Activated CD8-positive, alpha-beta T cell treated with anti-CD3 and anti-CD28 coated beads for 36 hours (primary cell): ENCODE measurements at regions of chr11 and their contacts with region 1.

Region 1: DNA sequence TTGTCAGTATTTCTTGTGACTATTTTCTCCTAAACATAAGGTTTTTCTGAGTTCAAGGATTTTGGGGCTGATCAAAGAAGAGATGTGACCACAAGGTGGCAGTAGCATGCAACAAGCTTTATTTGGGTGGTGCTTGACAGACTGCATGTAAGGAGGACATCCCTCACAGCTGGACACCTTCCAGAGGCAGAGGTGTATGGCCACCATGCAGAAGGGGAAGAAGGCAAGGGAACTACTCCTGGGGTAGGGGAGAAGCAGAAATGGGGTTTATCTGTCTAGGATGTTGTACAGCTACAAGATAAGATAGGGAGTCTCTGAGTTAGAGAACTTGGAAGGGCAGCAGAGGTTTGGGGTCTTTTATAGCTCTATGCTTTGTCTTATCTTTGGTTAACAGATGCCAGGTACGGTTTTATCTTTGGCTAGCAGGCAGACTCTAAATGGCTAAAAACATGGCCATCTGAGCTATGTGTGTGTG is 5.1 kb upstream of the BIRC2 start:
- DNase-seq: peak; percentile 87
- ATAC-seq: peak; percentile 63
- H3K4me3 Mint-ChIP-seq: no peak overlapping the region
- H3K27ac Mint-ChIP-seq: no peak overlapping the region
- H3K4me1 Mint-ChIP-seq: peaks cover 23% of the 10 kb centered on the region
- H3K27me3 Mint-ChIP-seq: no peaks in the 10 kb centered on the region
- CTCF ChIP-seq: peak; percentile 78

Region 2: GRCh38 chr11:102225689-102226568 is 116.0 kb before region 1 on chr11:
- CTCF ChIA-PET with region 1: no interaction called
- POLR2A ChIA-PET with region 1: no interaction called
- intact Hi-C with region 1: no loop called
- DNase-seq: no peak
- ATAC-seq: no peak
- H3K4me3 Mint-ChIP-seq: no peak overlapping the region
- H3K27ac Mint-ChIP-seq: no peak overlapping the region
- H3K4me1 Mint-ChIP-seq: no peaks in the 10 kb centered on the region
- H3K27me3 Mint-ChIP-seq: peaks cover 2% of the 10 kb centered on the region
- CTCF ChIP-seq: no peak

Region 3: DNA sequence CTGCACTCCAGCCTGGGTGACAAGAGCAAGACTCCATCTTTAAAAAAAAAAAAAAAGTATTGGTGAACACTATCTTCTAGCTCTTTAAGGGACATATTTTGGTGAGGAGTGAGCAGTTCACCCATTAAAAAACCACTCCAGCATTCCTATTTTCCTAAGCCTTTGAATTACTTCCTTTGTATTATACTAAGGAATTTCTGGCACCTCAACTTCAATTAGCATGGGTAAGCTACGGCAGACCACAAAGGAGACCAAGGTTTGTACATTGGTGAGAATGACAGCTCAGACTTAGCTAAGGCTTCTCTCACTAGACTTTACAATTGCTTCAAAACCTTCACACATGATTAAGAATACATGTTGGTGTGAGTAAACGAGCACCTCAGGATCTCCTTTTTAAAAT is 81.6 kb before region 1 on chr11:
- CTCF ChIA-PET with region 1: no interaction called
- POLR2A ChIA-PET with region 1: no interaction called
- intact Hi-C with region 1: no loop called
- DNase-seq: no peak
- ATAC-seq: no peak
- H3K4me3 Mint-ChIP-seq: no peak overlapping the region
- H3K27ac Mint-ChIP-seq: no peak overlapping the region
- H3K4me1 Mint-ChIP-seq: no peaks in the 10 kb centered on the region
- H3K27me3 Mint-ChIP-seq: no peaks in the 10 kb centered on the region
- CTCF ChIP-seq: no peak

Region 4: DNA sequence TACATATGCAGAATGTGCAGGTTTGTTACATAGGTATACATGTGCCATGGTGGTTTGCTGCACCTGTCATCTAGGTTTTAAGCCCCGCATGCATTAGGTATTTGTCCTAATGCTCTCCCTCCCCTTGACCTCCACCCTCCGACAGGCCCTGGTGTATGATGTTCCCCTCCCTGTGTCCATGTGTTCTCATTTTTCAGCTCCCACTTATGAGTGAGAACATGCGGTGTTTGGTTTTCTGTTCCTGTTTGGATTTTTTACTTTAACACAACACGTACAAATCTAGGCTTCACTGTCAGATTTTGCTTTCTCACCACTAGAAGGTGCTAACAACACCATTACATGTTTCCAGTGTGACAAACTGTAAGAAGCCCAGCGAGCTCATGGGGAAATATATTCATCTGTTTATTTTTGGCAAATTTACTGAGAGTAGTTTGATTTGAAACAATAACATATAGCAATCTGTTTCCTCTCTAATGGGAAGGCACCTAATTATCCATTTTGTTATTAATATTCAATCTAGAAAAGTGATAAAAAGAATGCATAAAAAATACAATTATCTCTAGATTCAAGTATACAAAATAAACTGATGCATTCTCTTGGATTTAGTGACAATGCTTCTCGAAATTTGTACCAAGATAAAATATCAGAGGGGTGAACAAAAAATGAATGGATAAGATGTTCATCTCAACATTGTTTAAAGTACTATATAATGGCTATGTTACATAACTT is 47.8 kb before region 1 on chr11:
- CTCF ChIA-PET with region 1: interaction called, 204 read pairs
- POLR2A ChIA-PET with region 1: no interaction called
- intact Hi-C with region 1: loop called (anchors 5 kb)
- DNase-seq: peak; percentile 30
- ATAC-seq: peak; percentile 95
- H3K4me3 Mint-ChIP-seq: peak overlapping the region; percentile 78
- H3K27ac Mint-ChIP-seq: peak overlapping the region; percentile 96
- H3K4me1 Mint-ChIP-seq: peaks cover 24% of the 10 kb centered on the region
- H3K27me3 Mint-ChIP-seq: no peaks in the 10 kb centered on the region
- CTCF ChIP-seq: peak; percentile 69

Region 5: DNA sequence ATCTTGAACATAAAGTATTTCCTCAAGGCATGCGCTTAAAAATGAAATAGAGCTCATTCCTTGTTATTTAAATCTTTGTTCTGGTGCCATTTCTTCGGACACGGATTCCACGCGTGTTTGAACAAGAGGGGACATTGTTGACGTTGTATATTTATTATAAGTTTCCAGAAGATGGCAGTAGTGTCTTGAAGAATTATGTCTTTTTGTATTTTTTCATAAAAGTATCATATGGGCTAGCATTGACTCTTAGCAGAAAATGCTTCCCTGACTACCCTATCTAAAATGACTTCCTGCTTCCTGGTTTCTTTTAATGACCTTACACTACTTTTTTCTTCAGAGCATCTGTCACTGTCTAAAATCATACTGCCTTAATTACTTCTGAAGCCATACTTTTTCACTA is 25.5 kb after region 1 on chr11:
- CTCF ChIA-PET with region 1: interaction called, 18 read pairs
- POLR2A ChIA-PET with region 1: interaction called, 3 read pairs
- intact Hi-C with region 1: no loop called
- DNase-seq: no peak
- ATAC-seq: peak; percentile 64
- H3K4me3 Mint-ChIP-seq: no peak overlapping the region
- H3K27ac Mint-ChIP-seq: peak overlapping the region; percentile 34
- H3K4me1 Mint-ChIP-seq: peaks cover 30% of the 10 kb centered on the region
- H3K27me3 Mint-ChIP-seq: no peaks in the 10 kb centered on the region
- CTCF ChIP-seq: peak; percentile 56

Region 6: DNA sequence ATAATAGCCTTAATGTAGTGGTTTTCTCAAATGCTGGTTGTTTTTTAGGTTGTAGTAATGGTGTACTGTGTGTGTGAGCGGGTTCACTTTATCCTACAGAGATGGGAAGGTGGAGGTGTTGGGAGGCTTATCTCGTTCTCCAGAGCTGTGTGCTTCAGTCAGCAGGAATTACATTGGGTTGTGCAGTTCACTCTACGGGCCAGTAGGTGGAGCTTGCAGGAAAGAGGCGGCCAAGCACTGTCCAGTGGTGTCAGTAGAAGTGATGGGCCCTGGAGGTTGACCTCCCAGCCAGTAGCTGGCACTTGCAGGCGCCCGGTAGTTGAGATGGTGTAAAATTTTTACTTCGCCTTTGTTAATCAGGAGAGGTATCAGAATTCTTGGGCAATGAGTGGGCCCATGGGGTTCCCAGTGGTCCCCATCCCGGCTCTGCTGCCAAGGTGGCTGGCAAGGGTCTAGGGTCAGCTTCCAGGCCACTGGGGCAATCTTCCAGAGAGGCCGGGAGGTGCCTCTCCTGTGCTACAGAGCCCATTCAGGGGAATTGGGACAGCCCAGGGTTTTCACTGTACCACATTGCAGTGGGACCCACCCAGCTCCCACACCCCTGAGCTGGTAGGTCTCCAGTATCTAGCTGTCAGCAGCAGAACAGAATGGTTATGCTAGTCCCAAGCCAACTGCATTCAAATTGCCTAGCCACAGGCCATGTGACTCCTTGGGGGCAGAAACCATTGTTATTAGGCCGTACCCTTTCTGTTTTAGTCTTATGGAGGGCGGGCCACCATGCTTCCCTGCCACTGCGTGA is 49.0 kb after region 1 on chr11:
- CTCF ChIA-PET with region 1: interaction called, 23 read pairs
- POLR2A ChIA-PET with region 1: no interaction called
- intact Hi-C with region 1: no loop called
- DNase-seq: peak; percentile 68
- ATAC-seq: peak; percentile 80
- H3K4me3 Mint-ChIP-seq: no peak overlapping the region
- H3K27ac Mint-ChIP-seq: peak overlapping the region; percentile 39
- H3K4me1 Mint-ChIP-seq: peaks cover 43% of the 10 kb centered on the region
- H3K27me3 Mint-ChIP-seq: no peaks in the 10 kb centered on the region
- CTCF ChIP-seq: peak; percentile 88

Region 7: GRCh38 chr11:102513869-102514268 is 172.0 kb after region 1 on chr11:
- CTCF ChIA-PET with region 1: interaction called, 12 read pairs
- POLR2A ChIA-PET with region 1: no interaction called
- intact Hi-C with region 1: no loop called
- DNase-seq: no peak
- ATAC-seq: no peak
- H3K4me3 Mint-ChIP-seq: no peak overlapping the region
- H3K27ac Mint-ChIP-seq: no peak overlapping the region
- H3K4me1 Mint-ChIP-seq: no peaks in the 10 kb centered on the region
- H3K27me3 Mint-ChIP-seq: no peaks in the 10 kb centered on the region
- CTCF ChIP-seq: no peak

Region 8: GRCh38 chr11:102614485-102614884 is 272.6 kb after region 1 on chr11:
- CTCF ChIA-PET with region 1: interaction called, 105 read pairs
- POLR2A ChIA-PET with region 1: no interaction called
- intact Hi-C with region 1: loop called (anchors 5 kb)
- DNase-seq: no peak
- ATAC-seq: peak; percentile 28
- H3K4me3 Mint-ChIP-seq: no peak overlapping the region
- H3K27ac Mint-ChIP-seq: no peak overlapping the region
- H3K4me1 Mint-ChIP-seq: peaks cover 5% of the 10 kb centered on the region
- H3K27me3 Mint-ChIP-seq: no peaks in the 10 kb centered on the region
- CTCF ChIP-seq: peak; percentile 25